PC-9 (cell line): ENCODE measurements at regions of chr2 and their contacts with region 1.

Region 1: DNA sequence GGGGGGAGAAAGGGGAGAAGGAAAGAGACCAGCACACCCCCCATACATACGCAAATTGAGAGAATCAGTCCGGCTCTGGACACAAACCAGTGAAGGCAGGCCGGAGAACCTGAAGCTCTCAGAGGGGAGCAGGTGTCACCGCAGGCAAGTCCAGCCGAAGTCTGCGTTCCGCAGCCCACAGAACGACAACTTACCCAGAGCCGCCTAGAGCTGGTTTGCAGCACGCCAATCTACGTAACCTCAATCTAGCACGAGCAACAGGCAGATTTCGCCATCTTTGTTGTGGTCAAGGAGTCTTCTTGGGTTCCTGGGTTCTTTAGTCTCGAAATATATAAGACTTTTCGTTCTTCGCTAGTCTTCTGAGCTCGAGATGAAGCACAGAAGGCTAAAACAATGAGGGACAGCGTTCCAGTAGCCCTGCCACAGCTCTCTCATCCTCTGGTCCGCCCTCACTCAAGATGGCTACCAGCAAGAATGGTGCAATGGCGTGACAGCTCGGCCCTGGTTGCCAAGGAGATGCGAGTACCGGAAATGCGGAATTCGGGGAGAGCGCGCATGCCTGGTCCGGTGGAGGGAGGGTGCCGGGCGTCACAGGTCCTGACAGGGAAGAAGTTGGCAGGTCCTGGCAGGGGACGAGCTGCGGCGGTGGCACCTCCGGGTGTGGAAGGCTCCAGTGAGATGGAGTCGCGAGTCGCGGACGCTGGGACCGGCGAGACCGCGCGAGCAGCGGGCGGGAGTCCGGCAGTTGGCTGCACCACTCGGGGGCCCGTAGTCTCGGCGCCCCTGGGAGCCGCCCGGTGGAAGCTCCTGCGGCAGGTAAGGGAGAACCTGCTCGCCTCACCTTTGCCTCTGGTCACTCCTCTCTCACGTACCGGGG is at the starts of genes CAMKMT and PREPL:
- DNase-seq: peak; percentile 95 to 98
- H3K4me3 ChIP-seq: peak within 1 kb of the TSS; percentile 67
- H3K27ac ChIP-seq: peak within 1 kb of the TSS; percentile 88
- H3K4me1 ChIP-seq: peaks cover 32% of the 10 kb centered on the region
- H3K27me3 ChIP-seq: no peaks in the 10 kb centered on the region
- CTCF ChIP-seq: no peak
- total RNA-seq, gene CAMKMT: 11.7 and 17.9 TPM in 2 replicates
- total RNA-seq, gene PREPL: 34.2 and 42.2 TPM in 2 replicates

Region 2: DNA sequence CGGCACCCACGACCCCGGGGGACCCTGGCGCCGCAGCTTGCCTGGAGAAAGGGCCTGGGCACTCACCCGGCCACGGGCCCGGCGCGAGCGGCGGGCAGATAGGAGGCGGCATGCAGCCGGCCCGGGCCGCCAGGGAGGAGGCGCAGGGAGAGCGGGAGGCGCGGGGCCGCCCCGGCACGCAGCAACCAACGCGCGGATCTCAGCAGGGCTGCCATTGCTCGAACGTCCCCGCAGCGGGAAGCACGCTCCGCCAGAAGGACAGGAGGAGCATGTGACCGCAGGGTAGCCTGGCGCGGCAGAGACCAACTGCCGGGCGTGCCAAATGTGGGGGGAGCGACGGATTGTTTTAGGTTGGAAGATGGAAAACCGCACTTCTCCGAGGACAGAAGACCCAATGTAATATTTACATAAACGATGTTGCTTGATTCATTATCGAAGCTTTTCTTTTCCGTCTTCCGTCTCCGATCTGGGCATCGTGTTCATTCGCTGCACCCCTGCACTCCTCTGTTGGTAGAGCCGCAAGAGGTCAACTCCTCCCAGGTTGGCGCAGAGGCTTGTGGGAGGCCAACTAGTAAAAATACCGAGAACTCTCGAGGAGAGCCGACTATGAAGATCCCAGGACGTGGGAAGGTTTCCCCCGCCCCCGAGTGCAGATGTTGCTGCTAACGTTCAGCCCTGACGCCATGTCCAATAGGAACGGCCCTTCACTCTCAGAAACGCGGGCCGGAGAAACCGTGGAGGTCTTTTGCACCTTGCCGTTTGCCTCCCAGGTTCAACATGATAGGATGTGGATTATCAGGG is 365.6 kb before region 1 on chr2 and contains the start of gene LRPPRC:
- CTCF ChIA-PET with region 1: no interaction called
- POLR2A ChIA-PET with region 1: no interaction called
- intact Hi-C with region 1: loop called (anchors 1 kb)
- DNase-seq: peak; percentile 88 to 94
- H3K4me3 ChIP-seq: peak within 1 kb of the TSS; percentile 97
- H3K27ac ChIP-seq: peak within 1 kb of the TSS; percentile 72
- H3K4me1 ChIP-seq: peaks cover 21% of the 10 kb centered on the region
- H3K27me3 ChIP-seq: no peaks in the 10 kb centered on the region
- CTCF ChIP-seq: no peak
- total RNA-seq, gene LRPPRC: 133 and 149 TPM in 2 replicates

Region 3: GRCh38 chr2:44305882-44306281 is 55.7 kb before region 1 on chr2:
- CTCF ChIA-PET with region 1: no interaction called
- POLR2A ChIA-PET with region 1: interaction called, 11 read pairs
- intact Hi-C with region 1: no loop called
- DNase-seq: no peak
- H3K4me3 ChIP-seq: no peak overlapping the region
- H3K27ac ChIP-seq: no peak overlapping the region
- H3K4me1 ChIP-seq: no peaks in the 10 kb centered on the region
- H3K27me3 ChIP-seq: no peaks in the 10 kb centered on the region
- CTCF ChIP-seq: no peak

Region 4: GRCh38 chr2:44315945-44316344 is 45.6 kb before region 1 on chr2:
- CTCF ChIA-PET with region 1: no interaction called
- POLR2A ChIA-PET with region 1: no interaction called
- intact Hi-C with region 1: no loop called
- DNase-seq: no peak
- H3K4me3 ChIP-seq: no peak overlapping the region
- H3K27ac ChIP-seq: no peak overlapping the region
- H3K4me1 ChIP-seq: no peaks in the 10 kb centered on the region
- H3K27me3 ChIP-seq: no peaks in the 10 kb centered on the region
- CTCF ChIP-seq: no peak

Region 5: DNA sequence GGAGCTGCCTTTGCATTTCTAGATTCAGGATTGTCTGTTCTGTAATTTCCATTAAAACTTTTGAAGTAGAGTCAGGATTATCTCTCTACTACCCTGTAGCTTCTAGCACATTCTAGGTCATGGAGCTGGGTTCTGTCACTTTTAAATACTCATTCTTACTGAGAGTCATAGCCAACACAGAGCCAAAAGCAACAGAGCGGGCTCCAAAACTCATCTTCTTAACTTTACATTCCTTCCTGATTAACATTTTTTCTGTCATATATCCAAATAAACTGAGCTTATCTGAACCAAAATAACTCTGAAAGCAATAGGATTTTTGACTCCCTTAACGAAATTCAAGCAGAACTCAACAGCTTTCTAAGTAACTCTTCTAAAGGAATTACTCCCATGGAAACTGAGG is 13.2 kb before region 1 on chr2:
- CTCF ChIA-PET with region 1: interaction called, 16 read pairs
- POLR2A ChIA-PET with region 1: no interaction called
- intact Hi-C with region 1: no loop called
- DNase-seq: no peak
- H3K4me3 ChIP-seq: no peak overlapping the region
- H3K27ac ChIP-seq: no peak overlapping the region
- H3K4me1 ChIP-seq: no peaks in the 10 kb centered on the region
- H3K27me3 ChIP-seq: no peaks in the 10 kb centered on the region
- CTCF ChIP-seq: no peak

Region 6: DNA sequence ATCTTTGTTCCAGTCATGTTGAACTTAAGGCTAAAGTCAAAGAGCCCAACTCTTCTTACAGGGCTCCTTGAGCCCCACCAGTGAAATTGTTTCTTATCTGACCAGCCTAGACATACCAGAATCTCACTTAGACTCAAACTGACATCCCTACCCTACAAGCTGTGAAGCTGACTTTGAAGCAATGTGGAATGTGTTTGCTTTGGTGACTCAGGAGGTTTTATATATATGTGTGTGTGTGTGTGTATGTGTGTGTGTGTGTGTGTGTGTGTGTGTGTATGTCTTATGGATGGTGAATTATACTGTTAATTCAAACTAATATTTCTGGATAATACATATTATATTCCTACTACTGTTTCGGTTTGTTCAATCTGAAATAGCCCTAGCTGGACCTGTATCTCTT is 67.5 kb after region 1 on chr2:
- CTCF ChIA-PET with region 1: no interaction called
- POLR2A ChIA-PET with region 1: no interaction called
- intact Hi-C with region 1: no loop called
- DNase-seq: peak in 1 of 2 experiments; percentile 52
- H3K4me3 ChIP-seq: no peak overlapping the region
- H3K27ac ChIP-seq: no peak overlapping the region
- H3K4me1 ChIP-seq: peaks cover 12% of the 10 kb centered on the region
- H3K27me3 ChIP-seq: no peaks in the 10 kb centered on the region
- CTCF ChIP-seq: no peak